PC-9 (cell line): ENCODE measurements at regions of chr6 and their contacts with region 1.

Region 1: GRCh38 chr6:125918681-125919566 is 37.6 kb upstream of the HINT3 start:
- DNase-seq: peak; percentile 59 to 99
- H3K4me3 ChIP-seq: peak overlapping the region; percentile 71
- H3K27ac ChIP-seq: peak overlapping the region; percentile 98
- H3K4me1 ChIP-seq: peaks cover 75% of the 10 kb centered on the region
- H3K27me3 ChIP-seq: no peaks in the 10 kb centered on the region
- CTCF ChIP-seq: no peak

Region 2: DNA sequence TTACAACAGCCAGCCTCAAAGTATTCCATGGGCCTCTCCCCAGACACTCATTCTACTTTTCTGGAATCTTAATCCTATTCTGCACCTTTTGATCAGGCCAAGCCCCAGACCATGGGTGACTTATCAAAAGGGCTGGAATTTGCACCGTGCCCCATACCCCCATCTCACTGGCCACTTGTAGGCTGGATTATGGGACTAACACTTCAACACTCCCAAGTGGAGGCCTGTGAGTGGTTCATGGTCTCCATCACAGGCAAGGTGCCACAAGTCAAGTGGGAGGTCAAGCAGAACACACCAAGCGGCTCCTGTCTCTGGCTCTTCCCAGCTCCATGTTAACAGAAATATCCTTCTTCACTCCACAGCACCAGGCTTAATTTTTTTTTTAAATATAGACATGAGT is 381.8 kb before region 1 on chr6:
- CTCF ChIA-PET with region 1: no interaction called
- POLR2A ChIA-PET with region 1: interaction called, 14 read pairs
- intact Hi-C with region 1: no loop called
- DNase-seq: no peak
- H3K4me3 ChIP-seq: no peak overlapping the region
- H3K27ac ChIP-seq: no peak overlapping the region
- H3K4me1 ChIP-seq: no peaks in the 10 kb centered on the region
- H3K27me3 ChIP-seq: no peaks in the 10 kb centered on the region
- CTCF ChIP-seq: no peak

Region 3: GRCh38 chr6:125812394-125813292 is 106.3 kb before region 1 on chr6:
- CTCF ChIA-PET with region 1: no interaction called
- POLR2A ChIA-PET with region 1: interaction called, 18 read pairs
- intact Hi-C with region 1: no loop called
- DNase-seq: peak; percentile 37 to 56
- H3K4me3 ChIP-seq: no peak overlapping the region
- H3K27ac ChIP-seq: peak overlapping the region; percentile 20
- H3K4me1 ChIP-seq: peaks cover 42% of the 10 kb centered on the region
- H3K27me3 ChIP-seq: no peaks in the 10 kb centered on the region
- CTCF ChIP-seq: no peak

Region 4: GRCh38 chr6:125834348-125834747 is 84.6 kb before region 1 on chr6:
- CTCF ChIA-PET with region 1: no interaction called
- POLR2A ChIA-PET with region 1: no interaction called
- intact Hi-C with region 1: no loop called
- DNase-seq: no peak
- H3K4me3 ChIP-seq: no peak overlapping the region
- H3K27ac ChIP-seq: no peak overlapping the region
- H3K4me1 ChIP-seq: no peaks in the 10 kb centered on the region
- H3K27me3 ChIP-seq: no peaks in the 10 kb centered on the region
- CTCF ChIP-seq: no peak

Region 5: GRCh38 chr6:125944434-125944816 is 25.5 kb after region 1 on chr6:
- CTCF ChIA-PET with region 1: no interaction called
- POLR2A ChIA-PET with region 1: interaction called, 11 read pairs
- intact Hi-C with region 1: loop called (anchors 1 kb)
- DNase-seq: peak; percentile 19 to 36
- H3K4me3 ChIP-seq: no peak overlapping the region
- H3K27ac ChIP-seq: peak overlapping the region; percentile 98
- H3K4me1 ChIP-seq: peaks cover 97% of the 10 kb centered on the region
- H3K27me3 ChIP-seq: no peaks in the 10 kb centered on the region
- CTCF ChIP-seq: no peak

Region 6: DNA sequence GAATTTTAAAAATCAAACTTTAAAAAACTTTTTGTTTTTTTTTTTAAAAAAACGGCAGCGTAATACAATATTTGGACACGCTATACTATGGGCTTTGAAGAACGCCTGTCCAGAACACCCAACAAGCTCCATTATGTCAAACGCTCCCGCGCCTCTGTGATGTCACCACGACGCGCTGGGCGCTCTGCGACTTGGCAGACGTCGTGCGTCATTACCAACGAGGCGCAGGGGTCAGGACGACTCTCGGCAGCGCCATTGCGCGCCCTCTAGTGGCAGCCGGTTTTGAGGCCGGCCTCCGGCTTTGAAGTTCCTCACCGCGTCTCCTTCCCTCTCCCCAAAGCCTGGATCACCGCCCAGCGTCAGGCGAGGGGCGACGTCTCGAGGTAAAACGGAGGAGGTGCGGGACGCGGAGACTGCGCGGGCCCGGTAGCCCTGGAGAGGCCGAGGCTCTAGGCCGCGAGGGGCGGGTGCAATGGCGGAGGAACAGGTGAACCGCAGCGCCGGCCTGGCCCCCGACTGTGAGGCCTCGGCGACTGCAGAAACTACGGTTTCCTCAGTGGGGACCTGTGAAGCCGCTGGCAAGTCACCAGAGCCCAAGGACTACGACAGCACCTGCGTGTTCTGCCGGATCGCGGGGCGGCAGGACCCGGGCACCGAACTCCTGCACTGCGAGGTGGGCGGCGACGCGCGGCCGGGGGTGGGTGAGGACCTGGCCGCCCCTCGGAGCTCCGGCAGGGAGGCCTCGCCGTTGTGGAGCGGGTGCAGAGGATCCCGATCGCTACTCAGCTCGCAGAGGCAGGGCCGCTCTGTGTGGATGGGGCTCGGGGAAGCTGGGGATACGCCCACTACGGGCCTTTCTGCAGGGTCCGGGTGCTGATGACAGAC is 37.8 kb after region 1 on chr6 and contains the start of gene HINT3:
- CTCF ChIA-PET with region 1: interaction called, 12 read pairs
- POLR2A ChIA-PET with region 1: interaction called, 5 read pairs
- intact Hi-C with region 1: loop called (anchors 2 kb)
- DNase-seq: peak; percentile 95 to 97
- H3K4me3 ChIP-seq: peak within 1 kb of the TSS; percentile 92
- H3K27ac ChIP-seq: peak within 1 kb of the TSS; percentile 80
- H3K4me1 ChIP-seq: peaks cover 21% of the 10 kb centered on the region
- H3K27me3 ChIP-seq: no peaks in the 10 kb centered on the region
- CTCF ChIP-seq: peak; percentile 99
- total RNA-seq, gene HINT3: 13.6 and 14.4 TPM in 2 replicates